Activated B cell treated with CpG ODN at 0.5 μM for 24 hours (primary cell): ENCODE measurements at regions of chr17 and their contacts with region 1.

Region 1: DNA sequence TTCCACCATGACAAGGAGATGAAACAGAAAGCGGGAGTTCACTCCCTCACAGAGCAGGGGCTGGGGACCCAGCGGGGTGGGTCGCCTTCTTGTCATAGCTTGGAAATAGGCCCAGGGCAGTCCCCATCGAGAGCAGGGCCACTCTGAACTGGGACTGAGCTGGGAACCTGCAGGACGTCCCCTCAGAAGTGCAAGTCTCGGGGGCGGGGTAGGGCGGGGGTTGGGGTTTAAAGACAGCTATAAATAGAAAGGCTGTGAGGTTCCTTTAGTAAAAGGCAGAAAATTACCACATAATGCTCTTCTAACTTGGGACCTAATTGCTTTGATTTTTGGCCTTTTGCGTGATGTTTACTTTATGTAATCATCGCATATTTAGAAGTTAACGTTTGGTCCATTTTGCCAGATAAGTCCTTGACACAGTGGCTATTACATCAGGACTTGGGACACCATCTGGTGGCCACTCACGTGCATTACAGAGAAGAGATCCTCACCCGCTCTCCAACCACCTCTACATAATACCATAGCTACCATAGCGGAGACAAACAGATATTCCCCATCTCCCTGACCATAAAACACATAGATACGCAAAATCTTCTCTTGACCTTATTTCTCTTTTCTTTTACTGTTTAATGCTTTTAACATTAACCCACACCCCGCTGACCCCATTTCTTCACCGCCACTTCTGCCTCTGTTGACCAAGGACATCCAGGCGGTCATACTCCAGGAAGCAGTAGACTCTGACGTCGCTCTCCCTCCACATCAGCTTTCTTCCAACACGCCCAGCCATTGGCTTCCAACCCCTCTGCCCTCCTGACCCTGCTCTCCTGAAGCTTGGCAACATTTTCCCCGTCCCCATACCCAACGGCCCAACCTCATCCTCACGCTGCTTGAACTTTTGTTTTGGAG is 27.5 kb upstream of the PIK3R6 start:
- DNase-seq: no peak
- ATAC-seq: peak; percentile 55
- H3K4me3 Mint-ChIP-seq: no peak overlapping the region
- H3K27ac Mint-ChIP-seq: peak overlapping the region; percentile 0
- H3K4me1 Mint-ChIP-seq: peaks cover 51% of the 10 kb centered on the region
- H3K27me3 Mint-ChIP-seq: no peaks in the 10 kb centered on the region
- CTCF ChIP-seq: no peak

Region 2: GRCh38 chr17:8753976-8754440 is 140.9 kb before region 1 on chr17:
- CTCF ChIA-PET with region 1: interaction called, 8 read pairs
- POLR2A ChIA-PET with region 1: no interaction called
- intact Hi-C with region 1: loop called (anchors 1 kb)
- DNase-seq: no peak
- ATAC-seq: no peak
- H3K4me3 Mint-ChIP-seq: no peak overlapping the region
- H3K27ac Mint-ChIP-seq: no peak overlapping the region
- H3K4me1 Mint-ChIP-seq: no peaks in the 10 kb centered on the region
- H3K27me3 Mint-ChIP-seq: peaks cover 30% of the 10 kb centered on the region
- CTCF ChIP-seq: no peak

Region 3: GRCh38 chr17:8798846-8799569 is 95.9 kb before region 1 on chr17 and contains the start of gene MFSD6L:
- CTCF ChIA-PET with region 1: interaction called, 24 read pairs
- POLR2A ChIA-PET with region 1: no interaction called
- intact Hi-C with region 1: loop called (anchors 1 kb)
- DNase-seq: no peak
- ATAC-seq: peak; percentile 71
- H3K4me3 Mint-ChIP-seq: peak within 1 kb of the TSS; percentile 38
- H3K27ac Mint-ChIP-seq: no peak within 1 kb of the TSS
- H3K4me1 Mint-ChIP-seq: peaks cover 11% of the 10 kb centered on the region
- H3K27me3 Mint-ChIP-seq: no peaks in the 10 kb centered on the region
- CTCF ChIP-seq: no peak
- total RNA-seq, gene MFSD6L: 0.20 TPM in 1 of 2 replicates, not detected in the other

Region 4: GRCh38 chr17:8857919-8858318 is 37.0 kb before region 1 on chr17:
- CTCF ChIA-PET with region 1: interaction called, 9 read pairs
- POLR2A ChIA-PET with region 1: interaction called, 12 read pairs
- intact Hi-C with region 1: loop called (anchors 1 kb)
- DNase-seq: peak; percentile 63
- ATAC-seq: peak; percentile 82
- H3K4me3 Mint-ChIP-seq: peak overlapping the region; percentile 70
- H3K27ac Mint-ChIP-seq: peak overlapping the region; percentile 65
- H3K4me1 Mint-ChIP-seq: peaks cover 51% of the 10 kb centered on the region
- H3K27me3 Mint-ChIP-seq: no peaks in the 10 kb centered on the region
- CTCF ChIP-seq: no peak

Region 5: GRCh38 chr17:8997994-8998628 is 103.2 kb after region 1 on chr17:
- CTCF ChIA-PET with region 1: interaction called, 34 read pairs
- POLR2A ChIA-PET with region 1: interaction called, 4 read pairs
- intact Hi-C with region 1: loop called (anchors 1 kb)
- DNase-seq: peak; percentile 72
- ATAC-seq: peak; percentile 74
- H3K4me3 Mint-ChIP-seq: no peak overlapping the region
- H3K27ac Mint-ChIP-seq: no peak overlapping the region
- H3K4me1 Mint-ChIP-seq: peaks cover 22% of the 10 kb centered on the region
- H3K27me3 Mint-ChIP-seq: peaks cover 10% of the 10 kb centered on the region
- CTCF ChIP-seq: peak; percentile 73